AG04450 (cell line): ENCODE measurements at regions of chr21 and their contacts with region 1.

Region 1: DNA sequence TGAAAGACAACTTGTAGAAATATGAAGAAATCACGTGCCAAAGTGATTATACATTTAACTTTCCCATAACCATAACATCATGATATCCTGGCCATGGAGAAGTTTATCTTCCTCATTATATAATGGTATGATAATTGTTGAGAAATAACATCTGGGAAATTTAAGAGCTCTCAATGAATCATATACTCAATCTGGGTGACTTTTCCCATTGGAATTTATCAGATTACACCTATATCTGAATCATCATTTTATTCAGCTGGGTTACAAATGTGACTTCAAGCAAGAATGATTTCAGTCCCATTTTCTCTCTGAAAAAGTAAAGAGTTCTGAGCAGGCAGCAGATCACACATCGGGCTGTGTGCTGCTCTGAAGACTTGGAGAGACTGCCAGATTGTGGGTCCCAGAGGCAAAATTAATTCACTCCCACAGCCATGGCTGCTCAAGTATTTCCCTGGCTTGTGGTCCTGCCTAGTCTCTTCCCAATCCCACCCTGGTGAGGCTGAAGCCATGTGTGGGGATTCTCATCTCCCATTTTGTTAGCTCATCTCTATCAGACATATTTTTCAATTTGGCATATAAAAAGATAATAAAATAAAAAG is 278.0 kb downstream of the MRPL39 start:
- DNase-seq: peak; percentile 59
- H3K4me3 ChIP-seq: no peak overlapping the region
- H3K27ac ChIP-seq: peak overlapping the region; percentile 82
- H3K27me3 ChIP-seq: no peaks in the 10 kb centered on the region
- CTCF ChIP-seq: no peak

Region 2: DNA sequence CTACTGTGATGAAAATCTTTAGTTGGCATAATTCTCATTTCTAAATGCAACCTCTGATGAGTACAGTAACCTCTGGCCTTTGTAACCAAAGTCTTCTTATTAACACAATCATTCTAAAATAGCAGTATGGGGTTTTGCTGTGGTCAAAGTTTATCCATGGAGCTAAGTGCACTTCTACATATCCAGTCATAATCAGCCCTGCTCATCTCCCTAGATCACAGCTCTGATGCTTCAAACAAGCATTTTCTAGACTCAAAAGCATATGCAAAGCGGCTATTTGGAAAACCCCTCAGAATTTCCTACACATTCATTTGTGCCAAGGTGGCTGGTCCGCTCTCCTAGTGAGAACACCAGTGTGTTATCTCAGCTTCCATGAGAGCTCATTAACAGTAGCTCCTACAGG is 140.6 kb before region 1 on chr21:
- CTCF ChIA-PET with region 1: no interaction called
- POLR2A ChIA-PET with region 1: no interaction called
- DNase-seq: no peak
- H3K4me3 ChIP-seq: no peak overlapping the region
- H3K27ac ChIP-seq: no peak overlapping the region
- H3K27me3 ChIP-seq: no peaks in the 10 kb centered on the region
- CTCF ChIP-seq: no peak

Region 3: DNA sequence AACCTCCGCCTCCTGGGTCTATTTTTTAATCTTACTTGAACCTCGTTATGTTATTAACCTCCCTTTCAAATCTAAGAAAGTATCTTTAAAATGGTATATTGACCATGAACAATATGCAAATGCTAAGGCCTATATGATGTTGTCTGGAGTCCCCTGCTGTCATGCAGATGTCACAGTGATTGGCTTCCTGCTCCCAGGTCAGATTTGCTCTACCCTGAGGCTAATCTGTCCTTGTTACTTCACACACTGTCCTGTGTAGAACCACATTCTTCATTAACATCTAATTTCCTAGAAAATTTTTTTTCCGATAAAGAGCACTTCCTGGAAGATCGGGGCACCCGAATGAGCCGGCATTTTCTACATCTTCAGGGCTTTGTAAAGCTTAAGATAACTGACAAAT is 28.7 kb before region 1 on chr21:
- CTCF ChIA-PET with region 1: no interaction called
- POLR2A ChIA-PET with region 1: no interaction called
- DNase-seq: no peak
- H3K4me3 ChIP-seq: no peak overlapping the region
- H3K27ac ChIP-seq: no peak overlapping the region
- H3K27me3 ChIP-seq: no peaks in the 10 kb centered on the region
- CTCF ChIP-seq: no peak

Region 4: GRCh38 chr21:25350056-25350455 is 20.7 kb after region 1 on chr21:
- CTCF ChIA-PET with region 1: interaction called, 11 read pairs
- POLR2A ChIA-PET with region 1: no interaction called
- DNase-seq: no peak
- H3K4me3 ChIP-seq: no peak overlapping the region
- H3K27ac ChIP-seq: no peak overlapping the region
- H3K27me3 ChIP-seq: no peaks in the 10 kb centered on the region
- CTCF ChIP-seq: peak; percentile 67

Region 5: DNA sequence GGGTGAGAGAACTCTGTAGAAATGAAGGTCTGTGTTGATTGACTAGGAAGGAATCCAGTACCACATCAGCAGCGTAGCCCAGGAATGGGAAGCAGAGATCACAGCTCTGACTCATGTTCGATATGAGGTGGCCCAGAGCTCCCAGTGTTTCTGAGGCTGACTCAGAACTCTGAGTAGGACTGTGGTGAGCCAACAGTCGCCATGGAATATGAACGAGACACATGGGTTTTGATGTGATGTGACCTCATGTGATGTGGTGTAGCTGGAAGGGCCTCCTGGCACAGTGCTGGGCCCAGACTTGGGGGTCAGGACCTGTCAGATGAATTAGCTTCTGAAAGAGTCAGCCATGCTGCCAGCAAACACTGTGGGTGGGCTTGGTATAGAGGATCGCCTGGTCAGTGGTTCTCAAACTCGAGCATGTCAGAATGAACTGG is 41.0 kb after region 1 on chr21:
- CTCF ChIA-PET with region 1: no interaction called
- POLR2A ChIA-PET with region 1: interaction called, 17 read pairs
- DNase-seq: peak; percentile 87
- H3K4me3 ChIP-seq: no peak overlapping the region
- H3K27ac ChIP-seq: peak overlapping the region; percentile 95
- H3K27me3 ChIP-seq: no peaks in the 10 kb centered on the region
- CTCF ChIP-seq: no peak